Activated T-helper 1 cell treated with anti-CD3 and anti-CD28 coated beads, Interleukin-12 subunit alpha, Interleukin-12 subunit beta, Interleukin-2, Interleukin-4 antibody, amounts not matched to agents 30 ng/mL and 10 ng/mL and 1 ng/mL, durations not matched to agents 14 hours and 24 hours and 36 hours (primary cell): ENCODE measurements at regions of chr14 and their contacts with region 1.

Region 1: DNA sequence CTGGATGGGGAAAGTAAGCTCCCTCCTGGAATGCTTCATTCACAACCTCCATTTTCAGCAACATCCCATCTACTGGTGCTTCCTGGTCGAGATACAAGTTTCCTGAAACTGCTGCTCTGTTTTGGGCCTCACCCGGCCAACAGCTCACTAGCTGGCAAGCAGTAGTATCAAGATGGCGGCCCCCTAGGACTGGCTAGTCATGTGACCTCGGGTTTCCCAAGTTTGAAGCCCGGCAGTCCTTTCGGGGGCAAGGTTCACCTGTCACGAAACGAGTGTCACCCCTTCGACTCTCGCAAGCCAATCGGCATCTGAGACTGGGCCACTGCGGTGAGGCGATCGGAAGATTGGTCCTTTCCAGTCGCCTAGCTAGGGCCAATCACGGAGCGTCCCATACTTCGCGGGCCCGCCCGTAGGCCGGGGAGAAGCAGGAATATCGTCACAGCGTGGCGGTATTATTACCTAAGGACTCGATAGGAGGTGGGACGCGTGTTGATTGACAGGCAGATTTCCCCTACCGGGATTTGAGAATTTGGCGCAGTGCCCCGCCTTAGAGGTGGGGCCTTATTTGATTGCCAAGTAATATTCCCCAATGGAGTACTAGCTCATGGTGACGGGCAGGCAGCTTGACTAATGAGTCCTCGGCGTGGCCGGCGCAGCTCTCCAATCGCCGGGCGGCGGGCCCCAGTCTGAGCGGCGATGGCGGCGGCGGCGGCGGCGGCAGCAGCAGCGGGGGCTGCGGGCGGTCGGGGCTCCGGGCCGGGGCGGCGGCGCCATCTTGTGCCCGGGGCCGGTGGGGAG is at the start of gene PABPN1:
- DNase-seq: peak; percentile 98
- H3K4me3 Mint-ChIP-seq: peak within 1 kb of the TSS; percentile 97
- H3K27ac Mint-ChIP-seq: peak within 1 kb of the TSS; percentile 97
- H3K4me1 Mint-ChIP-seq: peaks cover 30% of the 10 kb centered on the region
- H3K27me3 Mint-ChIP-seq: no peaks in the 10 kb centered on the region
- total RNA-seq, gene PABPN1: 252 and 266 TPM in 2 replicates

Region 2: GRCh38 chr14:22766456-22767322 is 554.3 kb before region 1 on chr14 and contains the start of gene OXA1L:
- intact Hi-C with region 1: loop called (anchors 10 kb)
- DNase-seq: peak; percentile 94
- H3K4me3 Mint-ChIP-seq: peak within 1 kb of the TSS; percentile 94
- H3K27ac Mint-ChIP-seq: peak within 1 kb of the TSS; percentile 96
- H3K4me1 Mint-ChIP-seq: peaks cover 22% of the 10 kb centered on the region
- H3K27me3 Mint-ChIP-seq: no peaks in the 10 kb centered on the region
- total RNA-seq, gene OXA1L: 125 and 127 TPM in 2 replicates

Region 3: GRCh38 chr14:23006544-23007419 is 314.2 kb before region 1 on chr14:
- intact Hi-C with region 1: loop called (anchors 1 kb)
- DNase-seq: peak; percentile 98
- H3K4me3 Mint-ChIP-seq: peak overlapping the region; percentile 97
- H3K27ac Mint-ChIP-seq: peak overlapping the region; percentile 97
- H3K4me1 Mint-ChIP-seq: peaks cover 52% of the 10 kb centered on the region
- H3K27me3 Mint-ChIP-seq: no peaks in the 10 kb centered on the region

Region 4: DNA sequence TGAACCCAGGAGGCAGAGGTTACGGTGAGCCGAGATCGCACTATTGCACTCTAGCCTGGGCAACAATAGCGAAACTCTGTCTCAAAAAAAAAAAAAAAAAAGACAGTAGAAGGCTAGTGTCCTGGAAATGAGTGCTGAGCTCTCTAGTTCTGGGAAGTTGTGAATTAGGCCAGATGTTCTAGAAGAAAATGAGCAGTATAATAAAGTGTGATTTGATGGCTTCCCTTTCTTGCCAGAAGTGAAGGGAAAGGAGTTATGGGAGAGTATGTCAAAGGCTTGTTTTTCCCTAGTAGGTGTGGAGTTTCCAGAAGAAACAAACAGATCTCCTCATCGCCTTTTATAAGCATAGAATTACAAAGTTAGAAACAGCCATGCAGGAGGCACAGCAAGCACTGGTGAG is 62.7 kb before region 1 on chr14:
- intact Hi-C with region 1: no loop called
- DNase-seq: no peak
- H3K4me3 Mint-ChIP-seq: no peak overlapping the region
- H3K27ac Mint-ChIP-seq: no peak overlapping the region
- H3K4me1 Mint-ChIP-seq: no peaks in the 10 kb centered on the region
- H3K27me3 Mint-ChIP-seq: peaks cover 43% of the 10 kb centered on the region

Region 5: GRCh38 chr14:23269193-23269592 is 51.8 kb before region 1 on chr14:
- intact Hi-C with region 1: loop called (anchors 1 kb)
- DNase-seq: no peak
- H3K4me3 Mint-ChIP-seq: no peak overlapping the region
- H3K27ac Mint-ChIP-seq: no peak overlapping the region
- H3K4me1 Mint-ChIP-seq: no peaks in the 10 kb centered on the region
- H3K27me3 Mint-ChIP-seq: peaks cover 25% of the 10 kb centered on the region

Region 6: DNA sequence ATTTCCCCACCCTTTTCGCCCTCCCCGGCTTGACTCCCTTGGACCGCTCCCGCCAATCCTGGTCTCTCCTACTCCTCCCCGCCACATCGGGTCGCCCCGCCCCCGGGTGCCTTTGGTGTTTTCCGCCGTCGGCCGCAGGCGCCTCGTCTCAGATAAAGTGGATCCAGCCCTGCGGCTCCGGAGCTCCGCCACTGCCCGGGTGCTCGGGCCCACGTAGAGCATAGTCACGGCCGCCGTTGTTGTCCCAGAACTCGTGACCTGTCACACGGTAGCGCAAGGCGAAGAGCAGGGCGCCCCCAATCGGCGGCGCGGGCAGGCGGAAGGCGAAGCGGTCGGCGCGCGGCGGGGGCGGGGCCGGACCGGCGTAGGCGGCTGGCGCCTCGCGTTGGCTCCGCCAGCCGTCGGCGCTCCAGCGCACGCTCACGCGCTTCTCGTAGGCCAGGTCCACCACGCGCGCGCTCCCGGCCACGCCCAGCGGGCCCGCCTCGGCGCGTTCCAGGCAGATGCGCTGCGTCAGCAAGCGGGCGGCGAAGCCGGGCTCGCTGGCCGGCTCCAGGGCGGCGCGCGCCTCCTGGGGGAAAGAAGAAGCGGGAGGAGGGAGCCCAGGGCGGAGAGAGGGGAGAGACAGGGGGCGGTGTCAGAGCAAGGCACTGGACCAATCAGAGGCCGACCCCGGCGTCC is 19.5 kb before region 1 on chr14:
- intact Hi-C with region 1: loop called (anchors 1 kb)
- DNase-seq: peak; percentile 99
- H3K4me3 Mint-ChIP-seq: peak overlapping the region; percentile 91
- H3K27ac Mint-ChIP-seq: peak overlapping the region; percentile 97
- H3K4me1 Mint-ChIP-seq: peaks cover 29% of the 10 kb centered on the region
- H3K27me3 Mint-ChIP-seq: no peaks in the 10 kb centered on the region

Region 7: GRCh38 chr14:23335623-23336022 is 14.7 kb after region 1 on chr14:
- intact Hi-C with region 1: no loop called
- DNase-seq: no peak
- H3K4me3 Mint-ChIP-seq: no peak overlapping the region
- H3K27ac Mint-ChIP-seq: no peak overlapping the region
- H3K4me1 Mint-ChIP-seq: no peaks in the 10 kb centered on the region
- H3K27me3 Mint-ChIP-seq: peaks cover 27% of the 10 kb centered on the region

Region 8: DNA sequence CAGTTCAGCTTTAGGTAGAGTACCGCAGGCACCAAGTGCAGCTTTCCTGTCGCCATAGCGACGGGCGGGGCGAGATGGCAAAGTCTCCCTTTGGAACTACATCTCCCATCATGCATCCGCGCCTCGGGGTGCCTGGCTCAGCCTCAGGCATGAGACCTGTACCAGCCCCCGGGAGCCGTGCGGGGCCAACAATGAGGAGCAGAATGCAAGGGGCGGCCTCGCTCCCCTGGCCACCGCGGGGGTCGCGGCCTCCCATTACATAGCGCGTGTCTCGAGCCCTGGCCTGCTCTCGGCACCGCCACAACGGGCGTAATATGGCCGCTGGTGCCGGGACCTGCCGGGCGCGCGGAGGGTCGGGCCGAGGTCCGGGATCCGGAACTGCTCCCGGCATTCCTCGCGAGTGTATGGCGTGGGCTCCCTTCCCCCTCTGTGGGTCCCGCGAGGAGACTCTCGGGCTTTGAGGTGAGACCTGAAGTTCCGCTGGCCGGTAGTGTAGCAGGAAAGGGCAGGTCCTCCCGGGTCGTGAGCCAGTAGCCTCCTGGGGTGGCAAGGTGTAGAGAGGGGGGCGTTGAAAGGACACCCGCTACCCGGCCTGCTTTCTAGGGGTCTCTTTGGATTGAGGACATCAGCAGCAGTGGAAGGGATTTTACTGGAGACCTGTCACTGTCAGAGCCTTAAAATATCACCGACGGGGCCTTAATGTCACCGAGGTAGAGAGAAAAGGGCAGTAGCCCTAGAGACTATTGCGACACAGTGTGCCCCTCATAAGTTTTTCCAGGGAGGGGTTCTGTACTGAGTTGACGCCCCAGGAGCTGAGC is 235.1 kb after region 1 on chr14 and contains the start of gene THTPA:
- intact Hi-C with region 1: loop called (anchors 1 kb)
- DNase-seq: peak; percentile 88
- H3K4me3 Mint-ChIP-seq: peak within 1 kb of the TSS; percentile 97
- H3K27ac Mint-ChIP-seq: peak within 1 kb of the TSS; percentile 97
- H3K4me1 Mint-ChIP-seq: peaks cover 31% of the 10 kb centered on the region
- H3K27me3 Mint-ChIP-seq: no peaks in the 10 kb centered on the region
- total RNA-seq, gene THTPA: 14.3 and 14.5 TPM in 2 replicates

Region 9: DNA sequence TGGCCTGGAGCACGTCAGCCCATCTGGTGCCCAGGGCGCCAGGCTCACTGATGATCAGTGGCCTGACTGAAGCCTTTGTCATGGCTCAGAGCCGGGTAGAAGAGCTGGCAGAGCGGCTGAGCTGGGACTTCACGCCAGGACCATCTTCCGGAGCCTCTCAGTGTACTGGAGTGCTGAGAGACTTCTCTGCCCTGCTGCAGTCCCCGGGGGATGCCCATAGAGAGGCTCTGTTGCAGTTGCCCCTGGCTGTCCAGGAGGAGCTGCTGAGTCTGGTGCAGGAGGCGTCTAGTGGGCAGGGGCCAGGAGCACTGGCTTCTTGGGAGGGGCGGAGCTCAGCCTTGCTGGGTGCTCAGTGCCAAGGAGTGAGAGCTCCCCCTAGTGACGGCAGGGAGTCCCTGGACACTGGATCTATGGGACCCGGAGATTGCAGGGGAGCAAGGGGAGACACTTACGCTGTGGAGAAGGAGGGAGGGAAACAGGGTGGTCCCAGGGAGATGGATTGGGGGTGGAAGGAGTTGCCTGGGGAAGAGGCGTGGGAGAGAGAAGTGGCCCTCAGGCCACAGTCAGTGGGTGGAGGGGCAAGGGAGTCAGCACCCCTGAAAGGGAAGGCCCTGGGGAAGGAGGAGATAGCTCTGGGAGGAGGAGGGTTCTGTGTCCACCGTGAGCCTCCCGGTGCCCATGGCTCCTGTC is 1110.7 kb after region 1 on chr14:
- intact Hi-C with region 1: loop called (anchors 10 kb)
- DNase-seq: peak; percentile 85
- H3K4me3 Mint-ChIP-seq: peak overlapping the region; percentile 90
- H3K27ac Mint-ChIP-seq: peak overlapping the region; percentile 95
- H3K4me1 Mint-ChIP-seq: peaks cover 51% of the 10 kb centered on the region
- H3K27me3 Mint-ChIP-seq: no peaks in the 10 kb centered on the region